ENCODE measurements at regions of chr12 and their contacts with region 1.

Region 1: GRCh38 chr12:49358483-49359141 is 8.7 kb upstream of the SPATS2 start:
- DNase-seq: peak; percentile 82
- H3K4me3 ChIP-seq: no peak overlapping the region
- H3K27ac ChIP-seq: no peak overlapping the region
- H3K4me1 ChIP-seq: no peaks in the 10 kb centered on the region
- H3K27me3 ChIP-seq: no peaks in the 10 kb centered on the region
- CTCF ChIP-seq: peak; percentile 74 to 76
- POLR2A ChIP-seq: no peak

Region 2: GRCh38 chr12:49105608-49106007 is 253.0 kb before region 1 on chr12:
- CTCF ChIA-PET with region 1: no interaction called
- POLR2A ChIA-PET with region 1: no interaction called
- dilution Hi-C with region 1: no loop called
- intact Hi-C with region 1: no loop called
- DNase-seq: peak; percentile 37
- H3K4me3 ChIP-seq: no peak overlapping the region
- H3K27ac ChIP-seq: peak overlapping the region; percentile 54
- H3K4me1 ChIP-seq: peaks cover 38% of the 10 kb centered on the region
- H3K27me3 ChIP-seq: no peaks in the 10 kb centered on the region
- CTCF ChIP-seq: no peak
- POLR2A ChIP-seq: no peak

Region 3: GRCh38 chr12:49131051-49131962 is 227.3 kb before region 1 on chr12 and contains the start of gene TUBA1B:
- CTCF ChIA-PET with region 1: no interaction called
- POLR2A ChIA-PET with region 1: no interaction called
- dilution Hi-C with region 1: no loop called
- intact Hi-C with region 1: no loop called
- DNase-seq: peak; percentile 89
- H3K4me3 ChIP-seq: peak within 1 kb of the TSS; percentile 69 to 99 (median 73)
- H3K27ac ChIP-seq: peak within 1 kb of the TSS; percentile 65
- H3K4me1 ChIP-seq: peaks cover 22% of the 10 kb centered on the region
- H3K27me3 ChIP-seq: no peaks in the 10 kb centered on the region
- CTCF ChIP-seq: no peak
- POLR2A ChIP-seq: peak; percentile 99
- total RNA-seq, gene TUBA1B: 2,228 and 2,245 TPM in 2 replicates

Region 4: DNA sequence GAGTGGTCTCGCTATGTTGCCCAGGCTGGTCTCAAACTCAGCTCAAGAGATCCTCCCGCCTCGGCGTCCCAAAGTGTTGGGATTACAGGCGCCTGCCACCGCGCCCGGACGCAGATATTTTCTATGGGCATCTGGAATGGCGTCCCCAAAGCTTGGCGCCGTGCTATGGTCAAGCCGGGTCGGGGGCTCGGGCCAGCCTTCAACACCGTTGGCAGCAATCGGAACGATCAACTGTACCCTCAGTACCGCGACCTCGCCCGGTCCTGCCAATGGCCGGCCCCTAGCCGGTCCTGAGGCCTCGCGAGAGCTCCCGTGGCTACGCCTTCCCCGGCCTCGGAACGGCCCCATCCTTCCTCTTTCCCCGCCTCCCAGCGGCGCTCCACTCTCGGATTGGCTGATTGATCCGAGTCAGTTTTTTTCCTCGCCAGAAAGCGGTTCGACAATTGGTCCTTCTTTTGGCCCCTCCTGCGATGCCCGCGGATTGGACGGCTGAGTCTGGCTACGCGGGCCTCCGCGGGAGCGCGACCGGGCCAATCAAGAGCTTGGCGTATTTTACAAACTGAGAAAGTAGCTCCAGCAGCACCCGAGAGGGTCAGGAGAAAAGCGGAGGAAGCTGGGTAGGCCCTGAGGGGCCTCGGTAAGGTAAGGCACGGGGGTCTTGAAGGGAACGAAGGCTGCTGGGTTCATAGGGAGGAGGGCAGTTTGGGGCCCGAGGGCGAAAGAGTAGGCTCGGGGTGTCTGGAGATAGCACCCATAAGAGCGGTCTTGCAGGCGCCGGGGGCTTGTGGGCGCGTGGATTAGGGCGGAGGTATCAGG is 35.7 kb before region 1 on chr12 and contains the start of gene TROAP:
- CTCF ChIA-PET with region 1: interaction called, 14 read pairs
- POLR2A ChIA-PET with region 1: no interaction called
- dilution Hi-C with region 1: no loop called
- intact Hi-C with region 1: no loop called
- DNase-seq: peak; percentile 99
- H3K4me3 ChIP-seq: peak within 1 kb of the TSS; percentile 59 to 90 (median 73)
- H3K27ac ChIP-seq: peak within 1 kb of the TSS; percentile 58
- H3K4me1 ChIP-seq: peaks cover 12% of the 10 kb centered on the region
- H3K27me3 ChIP-seq: no peaks in the 10 kb centered on the region
- CTCF ChIP-seq: no peak
- POLR2A ChIP-seq: peak; percentile 52
- total RNA-seq, gene TROAP: 62.4 and 68.6 TPM in 2 replicates

Region 5: DNA sequence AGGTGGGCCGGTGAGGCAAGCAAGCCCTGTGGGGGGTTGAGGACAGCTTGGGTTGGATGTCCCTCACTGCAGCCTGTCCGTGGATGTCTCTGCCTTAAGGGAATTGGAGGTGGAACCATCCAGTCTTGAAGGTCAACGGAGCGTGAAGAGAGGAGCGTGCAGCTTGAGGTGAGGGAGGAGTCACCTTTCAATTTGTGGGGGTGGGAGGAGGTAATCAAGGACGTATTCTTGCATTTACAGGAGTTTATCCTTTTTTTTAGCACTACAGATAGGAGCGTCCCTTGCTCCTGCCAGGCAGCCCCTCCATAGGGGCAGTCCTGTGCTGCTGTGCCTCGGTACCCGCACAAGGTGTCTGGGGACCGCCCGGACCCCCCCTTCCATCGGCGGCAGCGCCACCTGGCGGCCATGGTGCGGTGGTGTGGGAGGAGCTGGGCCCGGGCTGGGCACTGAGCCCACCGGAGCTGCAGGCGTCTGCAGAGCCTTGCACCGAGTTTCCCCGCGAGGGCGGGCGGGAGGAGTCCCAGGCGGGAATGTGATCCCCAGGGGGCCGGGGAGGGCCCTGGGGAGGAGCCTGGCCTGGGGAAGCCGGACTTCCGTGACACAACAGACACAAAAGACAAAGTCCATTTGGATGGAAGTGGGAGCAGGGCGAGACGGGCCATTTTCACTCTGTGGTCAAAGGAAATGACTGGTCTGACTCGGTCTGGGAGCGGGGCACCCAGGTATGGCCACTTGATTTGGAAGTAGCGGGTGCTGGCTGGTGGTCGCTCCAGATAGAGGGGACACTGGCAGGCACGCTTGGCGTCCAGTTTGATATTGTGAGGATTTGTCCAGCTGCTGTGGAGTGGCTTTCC is 11.0 kb before region 1 on chr12:
- CTCF ChIA-PET with region 1: interaction called, 157 read pairs
- POLR2A ChIA-PET with region 1: interaction called, 3 read pairs
- dilution Hi-C with region 1: no loop called
- intact Hi-C with region 1: no loop called
- DNase-seq: peak; percentile 69
- H3K4me3 ChIP-seq: peak overlapping the region in 1 of 3 experiments; percentile 1
- H3K27ac ChIP-seq: no peak overlapping the region
- H3K4me1 ChIP-seq: peaks cover 37% of the 10 kb centered on the region
- H3K27me3 ChIP-seq: peaks cover 27 to 38% of the 10 kb centered on the region in 2 experiments
- CTCF ChIP-seq: peak; percentile 95 to 98
- POLR2A ChIP-seq: no peak

Region 6: DNA sequence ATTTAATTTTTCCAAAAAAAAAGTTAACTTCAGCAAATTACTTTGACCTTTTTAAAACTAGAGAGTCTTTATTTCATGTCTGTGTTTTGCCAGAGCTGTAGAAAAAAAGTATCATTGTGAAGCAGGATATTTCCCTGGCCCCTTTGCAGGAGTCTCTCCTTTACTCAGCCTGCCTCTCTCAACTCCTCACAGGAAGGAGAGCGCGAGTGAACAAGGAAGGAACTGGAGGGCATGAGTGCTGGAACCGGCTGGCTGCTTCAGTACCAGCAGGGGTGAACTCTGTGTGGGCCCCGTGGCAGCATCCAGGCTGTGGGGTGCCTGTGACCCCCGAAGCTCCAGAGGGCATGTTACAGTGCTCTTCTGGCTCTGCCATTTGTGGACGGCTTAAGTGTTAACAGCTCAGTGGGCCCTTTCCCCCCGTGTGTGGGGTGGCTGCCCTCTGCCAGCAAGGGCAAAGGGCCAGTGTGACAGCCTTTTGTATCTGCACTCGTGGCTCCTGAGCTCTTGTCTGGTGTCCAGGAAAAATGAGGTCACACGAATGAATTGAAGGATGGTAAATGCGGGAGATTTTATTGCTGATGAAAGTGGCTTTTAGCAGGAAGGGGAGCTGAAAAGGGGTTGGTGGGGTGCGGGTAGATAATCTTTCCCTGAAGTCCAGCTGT is 103.6 kb after region 1 on chr12:
- CTCF ChIA-PET with region 1: interaction called, 33 read pairs
- POLR2A ChIA-PET with region 1: no interaction called
- dilution Hi-C with region 1: no loop called
- intact Hi-C with region 1: no loop called
- DNase-seq: peak; percentile 47
- H3K4me3 ChIP-seq: no peak overlapping the region
- H3K27ac ChIP-seq: peak overlapping the region; percentile 20
- H3K4me1 ChIP-seq: peaks cover 29% of the 10 kb centered on the region
- H3K27me3 ChIP-seq: no peaks in the 10 kb centered on the region
- CTCF ChIP-seq: no peak
- POLR2A ChIP-seq: no peak

Region 7: GRCh38 chr12:49503674-49504180 is 145.1 kb after region 1 on chr12:
- CTCF ChIA-PET with region 1: interaction called, 78 read pairs
- POLR2A ChIA-PET with region 1: no interaction called
- dilution Hi-C with region 1: loop called (anchors 25 kb)
- intact Hi-C with region 1: no loop called
- DNase-seq: peak; percentile 94
- H3K4me3 ChIP-seq: peak overlapping the region in 1 of 3 experiments; percentile 21
- H3K27ac ChIP-seq: peak overlapping the region; percentile 86
- H3K4me1 ChIP-seq: peaks cover 68% of the 10 kb centered on the region
- H3K27me3 ChIP-seq: no peaks in the 10 kb centered on the region
- CTCF ChIP-seq: no peak
- POLR2A ChIP-seq: no peak

Region 8: GRCh38 chr12:49553512-49554088 is 195.0 kb after region 1 on chr12:
- CTCF ChIA-PET with region 1: interaction called, 89 read pairs
- POLR2A ChIA-PET with region 1: no interaction called
- dilution Hi-C with region 1: no loop called
- intact Hi-C with region 1: no loop called
- DNase-seq: peak; percentile 44
- H3K4me3 ChIP-seq: no peak overlapping the region
- H3K27ac ChIP-seq: no peak overlapping the region
- H3K4me1 ChIP-seq: peaks cover 6% of the 10 kb centered on the region
- H3K27me3 ChIP-seq: peaks cover 0 to 2% of the 10 kb centered on the region in 2 experiments
- CTCF ChIP-seq: peak; percentile 30 to 34
- POLR2A ChIP-seq: no peak

Region 9: GRCh38 chr12:49720214-49720613 is 361.6 kb after region 1 on chr12:
- CTCF ChIA-PET with region 1: no interaction called
- POLR2A ChIA-PET with region 1: no interaction called
- dilution Hi-C with region 1: no loop called
- intact Hi-C with region 1: no loop called
- DNase-seq: no peak
- H3K4me3 ChIP-seq: no peak overlapping the region
- H3K27ac ChIP-seq: no peak overlapping the region
- H3K4me1 ChIP-seq: no peaks in the 10 kb centered on the region
- H3K27me3 ChIP-seq: peaks cover 9 to 17% of the 10 kb centered on the region in 2 experiments
- CTCF ChIP-seq: no peak
- POLR2A ChIP-seq: no peak